CD8-positive, alpha-beta T cell (primary cell): ENCODE measurements at regions of chr12 and their contacts with region 1.

Region 1: GRCh38 chr12:57088459-57089248 is at the start of gene NAB2:
- DNase-seq: peak; percentile 87 to 97 (median 95)
- ATAC-seq: peak; percentile 60
- H3K4me3 ChIP-seq: peak within 1 kb of the TSS; percentile 87 to 95
- H3K4me3 Mint-ChIP-seq: peak within 1 kb of the TSS; percentile 92
- H3K27ac ChIP-seq: peak within 1 kb of the TSS; percentile 97 to 100
- H3K27ac Mint-ChIP-seq: peak within 1 kb of the TSS; percentile 95
- H3K4me1 ChIP-seq: peaks cover 47% of the 10 kb centered on the region
- H3K4me1 Mint-ChIP-seq: peaks cover 64% of the 10 kb centered on the region
- H3K27me3 ChIP-seq: no peaks in the 10 kb centered on the region
- H3K27me3 Mint-ChIP-seq: no peaks in the 10 kb centered on the region
- CTCF ChIP-seq: no peak
- total RNA-seq, gene NAB2: 5.9 to 6.7 TPM

Region 2: GRCh38 chr12:56338308-56339157 is 750.1 kb before region 1 on chr12 and contains the start of gene IL23A:
- CTCF ChIA-PET with region 1: no interaction called
- POLR2A ChIA-PET with region 1: no interaction called
- intact Hi-C with region 1: no loop called
- DNase-seq: peak; percentile 56 to 95 (median 84)
- ATAC-seq: peak; percentile 76
- H3K4me3 ChIP-seq: peak within 1 kb of the TSS; percentile 53 to 55
- H3K4me3 Mint-ChIP-seq: peak within 1 kb of the TSS; percentile 93
- H3K27ac ChIP-seq: peak within 1 kb of the TSS; percentile 71 to 89
- H3K27ac Mint-ChIP-seq: peak within 1 kb of the TSS; percentile 99
- H3K4me1 ChIP-seq: peaks cover 32% of the 10 kb centered on the region
- H3K4me1 Mint-ChIP-seq: peaks cover 53% of the 10 kb centered on the region
- H3K27me3 ChIP-seq: no peaks in the 10 kb centered on the region
- H3K27me3 Mint-ChIP-seq: no peaks in the 10 kb centered on the region
- CTCF ChIP-seq: no peak
- total RNA-seq, gene IL23A: 21.3 to 26.7 TPM

Region 3: GRCh38 chr12:57101844-57102695 is 13.4 kb after region 1 on chr12:
- CTCF ChIA-PET with region 1: interaction called, 547 read pairs
- POLR2A ChIA-PET with region 1: interaction called, 244 read pairs
- intact Hi-C with region 1: no loop called
- DNase-seq: no peak
- ATAC-seq: peak; percentile 23
- H3K4me3 ChIP-seq: no peak overlapping the region
- H3K4me3 Mint-ChIP-seq: no peak overlapping the region
- H3K27ac ChIP-seq: peak overlapping the region; percentile 12 to 62
- H3K27ac Mint-ChIP-seq: peak overlapping the region; percentile 87
- H3K4me1 ChIP-seq: peaks cover 10% of the 10 kb centered on the region
- H3K4me1 Mint-ChIP-seq: peaks cover 46% of the 10 kb centered on the region
- H3K27me3 ChIP-seq: no peaks in the 10 kb centered on the region
- H3K27me3 Mint-ChIP-seq: no peaks in the 10 kb centered on the region
- CTCF ChIP-seq: no peak

Region 4: GRCh38 chr12:57151741-57152630 is 63.3 kb after region 1 on chr12:
- CTCF ChIA-PET with region 1: no interaction called
- POLR2A ChIA-PET with region 1: no interaction called
- intact Hi-C with region 1: no loop called
- DNase-seq: no peak
- ATAC-seq: no peak
- H3K4me3 ChIP-seq: no peak overlapping the region
- H3K4me3 Mint-ChIP-seq: no peak overlapping the region
- H3K27ac ChIP-seq: no peak overlapping the region
- H3K27ac Mint-ChIP-seq: no peak overlapping the region
- H3K4me1 ChIP-seq: no peaks in the 10 kb centered on the region
- H3K4me1 Mint-ChIP-seq: no peaks in the 10 kb centered on the region
- H3K27me3 ChIP-seq: no peaks in the 10 kb centered on the region
- H3K27me3 Mint-ChIP-seq: peaks cover 2% of the 10 kb centered on the region
- CTCF ChIP-seq: no peak